ENCODE measurements at regions of chr9 and their contacts with region 1.

Region 1: DNA sequence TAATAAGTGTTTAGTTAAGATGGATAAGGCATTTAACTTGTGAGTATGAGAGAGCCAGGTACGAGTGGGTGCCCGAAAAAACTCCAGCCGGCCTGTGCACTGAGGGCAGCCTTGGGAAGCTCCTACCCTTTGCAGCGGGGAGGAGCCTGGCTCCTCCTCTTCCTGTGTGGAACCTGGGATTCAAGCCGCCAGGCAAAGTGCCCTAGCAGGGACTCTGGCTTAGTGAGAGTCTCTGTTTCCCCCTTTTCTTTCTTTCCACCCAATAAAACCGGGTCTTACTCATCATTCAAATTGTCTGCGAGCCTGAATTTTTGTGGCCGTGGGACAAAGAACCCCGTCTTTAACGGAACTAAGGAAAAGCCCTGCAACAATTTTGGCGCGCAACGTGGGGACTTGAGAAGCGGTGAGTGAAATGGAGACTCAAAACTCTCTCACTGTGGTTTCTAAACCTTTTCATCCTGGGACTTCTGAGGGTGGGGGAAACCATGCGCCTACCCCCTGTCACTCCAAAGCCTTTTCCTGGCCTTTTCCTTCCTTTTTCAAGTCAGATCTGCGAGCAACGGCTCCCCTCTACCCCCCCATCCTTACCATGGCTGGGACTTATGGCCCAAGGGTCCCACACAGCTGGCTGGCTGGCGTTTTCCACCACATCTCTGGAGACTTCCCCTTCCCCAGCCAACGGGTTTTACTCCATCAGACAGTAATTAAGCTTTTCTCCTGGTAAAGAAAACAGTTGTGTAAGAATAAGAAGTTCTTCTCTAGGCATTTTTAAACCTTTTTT is 535.7 kb upstream of the ACO1 start:
- DNase-seq: peak; percentile 37
- ATAC-seq: peak; percentile 98
- H3K4me3 ChIP-seq: peak overlapping the region; percentile 67 to 69
- H3K27ac ChIP-seq: peak overlapping the region; percentile 60; the same call in 1 of the 2 replicates
- H3K4me1 ChIP-seq: peaks cover 3 to 13% of the 10 kb centered on the region in 2 experiments; a peak in 2 of 4 replicates
- H3K27me3 ChIP-seq: no peaks in the 10 kb centered on the region
- CTCF ChIP-seq: no peak
- POLR2A ChIP-seq: peak; percentile 54
- RAD21 ChIP-seq: no peak

Region 2: GRCh38 chr9:31188496-31188895 is 660.2 kb before region 1 on chr9:
- CTCF ChIA-PET with region 1: no interaction called
- POLR2A ChIA-PET with region 1: no interaction called
- RAD21 ChIA-PET with region 1: no interaction called
- intact Hi-C with region 1: no loop called
- DNase-seq: no peak
- ATAC-seq: no peak
- H3K4me3 ChIP-seq: no peak overlapping the region
- H3K27ac ChIP-seq: no peak overlapping the region
- H3K4me1 ChIP-seq: no peaks in the 10 kb centered on the region
- H3K27me3 ChIP-seq: no peaks in the 10 kb centered on the region
- CTCF ChIP-seq: no peak
- POLR2A ChIP-seq: no peak
- RAD21 ChIP-seq: no peak

Region 3: DNA sequence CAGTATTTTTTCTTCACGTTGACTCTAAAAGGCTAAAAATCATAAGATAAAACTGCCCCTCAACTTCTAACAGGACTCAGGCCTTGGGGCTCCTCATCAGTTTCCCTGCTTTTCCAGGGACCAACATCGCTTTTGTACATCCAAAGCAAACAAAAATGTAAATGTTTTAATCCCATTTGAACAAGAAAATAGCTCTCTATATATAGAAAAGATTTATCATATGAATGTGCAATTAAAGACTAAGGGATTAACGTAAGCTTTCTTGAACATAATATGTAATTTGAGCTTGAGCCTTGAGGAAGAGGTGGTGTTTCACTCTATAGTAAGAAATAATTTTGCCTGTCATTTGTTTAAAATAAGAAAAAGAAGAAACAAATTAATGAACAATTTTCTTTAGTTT is 11.5 kb before region 1 on chr9:
- CTCF ChIA-PET with region 1: no interaction called
- POLR2A ChIA-PET with region 1: no interaction called
- RAD21 ChIA-PET with region 1: no interaction called
- intact Hi-C with region 1: no loop called
- DNase-seq: no peak
- ATAC-seq: no peak
- H3K4me3 ChIP-seq: no peak overlapping the region
- H3K27ac ChIP-seq: no peak overlapping the region
- H3K4me1 ChIP-seq: no peaks in the 10 kb centered on the region
- H3K27me3 ChIP-seq: no peaks in the 10 kb centered on the region
- CTCF ChIP-seq: no peak
- POLR2A ChIP-seq: no peak
- RAD21 ChIP-seq: no peak

Region 4: GRCh38 chr9:32334100-32334499 is 485.4 kb after region 1 on chr9:
- CTCF ChIA-PET with region 1: no interaction called
- POLR2A ChIA-PET with region 1: no interaction called
- RAD21 ChIA-PET with region 1: no interaction called
- intact Hi-C with region 1: loop called (anchors 5 kb)
- DNase-seq: no peak
- ATAC-seq: no peak
- H3K4me3 ChIP-seq: no peak overlapping the region
- H3K27ac ChIP-seq: no peak overlapping the region
- H3K4me1 ChIP-seq: no peaks in the 10 kb centered on the region
- H3K27me3 ChIP-seq: no peaks in the 10 kb centered on the region
- CTCF ChIP-seq: peak in 1 of 3 experiments; percentile 15; a peak in 1 of 6 replicates
- POLR2A ChIP-seq: no peak
- RAD21 ChIP-seq: no peak